Mucosa of descending colon (tissue), 3 donors: ENCODE measurements at regions of chrX and their contacts with region 1.

Region 1: GRCh38 chrX:130079824-130080406 is 30.4 kb downstream of the ELF4 start:
- DNase-seq: peak in 2 of 3 donors; percentile 35 to 71
- ATAC-seq: peak; percentile 70
- H3K4me3 ChIP-seq: no peak overlapping the region
- H3K4me1 ChIP-seq: no peaks in the 10 kb centered on the region
- CTCF ChIP-seq: no peak

Region 2: GRCh38 chrX:130190801-130191200 is 110.9 kb after region 1 on chrX:
- intact Hi-C with region 1: loop called (anchors 2 to 10 kb)
- DNase-seq: no peak
- ATAC-seq: no peak
- H3K4me3 ChIP-seq: no peak overlapping the region
- H3K4me1 ChIP-seq: no peaks in the 10 kb centered on the region
- CTCF ChIP-seq: no peak

Region 3: GRCh38 chrX:130196466-130196865 is 116.6 kb after region 1 on chrX:
- intact Hi-C with region 1: loop called (anchors 2 to 10 kb)
- DNase-seq: no peak
- ATAC-seq: no peak
- H3K4me3 ChIP-seq: no peak overlapping the region
- H3K4me1 ChIP-seq: no peaks in the 10 kb centered on the region
- CTCF ChIP-seq: no peak